Common myeloid progenitor, CD34-positive (primary cell): ENCODE measurements at regions of chr14 and their contacts with region 1.

Region 1: DNA sequence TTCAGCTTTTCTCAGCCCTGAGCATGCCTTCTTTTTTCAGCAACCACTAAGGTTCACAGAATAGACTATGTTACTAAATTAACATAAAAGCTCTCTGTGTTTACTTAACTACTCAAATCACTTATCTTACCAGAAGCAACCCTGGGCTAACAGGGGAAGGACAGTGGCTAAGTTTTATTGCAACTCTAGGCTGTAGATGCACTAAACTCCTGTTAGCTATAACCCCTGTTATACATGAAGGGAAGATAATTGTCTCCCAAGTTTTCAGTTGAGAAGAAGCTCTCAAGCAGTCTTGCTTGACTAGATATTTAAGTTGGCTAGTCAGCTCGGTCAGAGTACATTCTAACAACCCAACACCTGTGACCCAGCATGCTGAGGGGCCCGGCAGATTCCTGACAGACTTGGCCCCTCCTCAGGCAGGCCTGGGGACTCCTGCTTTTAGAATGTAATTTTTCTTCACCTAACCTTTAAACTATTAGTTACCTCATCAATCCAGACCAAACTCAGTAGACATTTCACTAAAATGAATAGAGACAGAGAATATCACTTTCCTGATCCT is 464.5 kb downstream of the EGLN3 start:
- DNase-seq: no peak
- H3K4me3 ChIP-seq: no peak overlapping the region
- H3K27ac ChIP-seq: no peak overlapping the region
- H3K4me1 ChIP-seq: peaks cover 12 to 30% (median 14%) of the 10 kb centered on the region in 4 experiments
- H3K27me3 ChIP-seq: no peaks in the 10 kb centered on the region

Region 2: DNA sequence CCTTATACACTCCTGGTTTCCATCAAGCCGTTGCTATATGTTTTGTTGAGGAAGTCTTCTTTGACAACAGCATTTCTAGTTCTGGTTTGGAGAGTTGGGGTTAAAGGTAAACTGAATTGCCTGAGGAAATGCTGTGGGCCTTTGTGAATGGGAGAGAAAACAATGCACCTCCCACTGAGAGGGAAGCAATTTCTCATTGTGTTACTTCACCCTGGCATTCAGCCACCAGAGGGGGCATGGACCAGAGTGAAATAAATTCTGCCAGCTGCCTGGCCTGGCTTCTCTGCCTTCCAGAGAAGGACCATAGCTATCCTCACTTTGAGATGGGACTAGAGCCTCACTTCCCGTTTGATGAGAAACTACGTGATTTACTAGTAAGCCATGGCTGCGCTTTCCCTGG is 10.8 kb before region 1 on chr14:
- CTCF ChIA-PET with region 1: interaction called, 11 read pairs
- POLR2A ChIA-PET with region 1: no interaction called
- DNase-seq: peak; percentile 66 to 80 (median 73)
- H3K4me3 ChIP-seq: no peak overlapping the region
- H3K27ac ChIP-seq: no peak overlapping the region
- H3K4me1 ChIP-seq: peaks cover 0 to 1% (median 0%) of the 10 kb centered on the region in 4 experiments
- H3K27me3 ChIP-seq: no peaks in the 10 kb centered on the region

Region 3: GRCh38 chr14:33511851-33512640 is 25.6 kb after region 1 on chr14:
- CTCF ChIA-PET with region 1: no interaction called
- POLR2A ChIA-PET with region 1: no interaction called
- DNase-seq: no peak
- H3K4me3 ChIP-seq: no peak overlapping the region
- H3K27ac ChIP-seq: no peak overlapping the region
- H3K4me1 ChIP-seq: peaks cover 0 to 3% (median 0%) of the 10 kb centered on the region in 4 experiments
- H3K27me3 ChIP-seq: no peaks in the 10 kb centered on the region